ENCODE measurements at regions of chr3 and their contacts with region 1.

Region 1: GRCh38 chr3:157572559-157573270 is 69.5 kb upstream of the VEPH1 start:
- DNase-seq: no peak
- H3K4me3 ChIP-seq: no peak overlapping the region
- CTCF ChIP-seq: no peak
- POLR2A ChIP-seq: no peak

Region 2: GRCh38 chr3:157532529-157533297 is 40.0 kb before region 1 on chr3:
- intact Hi-C with region 1: loop called (anchors 5 kb)
- DNase-seq: peak in 1 of 2 donors; percentile 29
- H3K4me3 ChIP-seq: no peak overlapping the region
- CTCF ChIP-seq: no peak
- POLR2A ChIP-seq: no peak

Region 3: DNA sequence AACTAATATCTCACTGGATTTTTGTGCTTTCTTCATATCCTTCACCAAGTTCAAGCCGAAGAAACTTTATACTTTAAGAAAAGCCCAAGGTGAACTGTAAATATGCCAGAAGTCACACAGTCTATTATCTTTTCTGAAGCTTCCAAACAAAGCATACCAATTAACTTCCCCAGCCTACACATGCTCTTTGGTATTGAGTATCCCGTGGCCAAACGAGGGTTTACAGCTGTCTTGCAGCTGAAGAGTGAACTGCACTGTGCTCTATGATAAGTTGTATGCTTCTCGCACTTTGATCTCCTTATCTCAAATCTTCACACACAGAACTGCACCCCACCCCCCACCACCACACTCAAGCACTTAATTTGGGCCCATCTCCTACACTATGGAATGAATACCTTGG is 146.1 kb after region 1 on chr3:
- intact Hi-C with region 1: no loop called
- DNase-seq: no peak
- H3K4me3 ChIP-seq: no peak overlapping the region
- CTCF ChIP-seq: no peak
- POLR2A ChIP-seq: no peak